ENCODE measurements at regions of chr14 and their contacts with region 1.

Region 1: GRCh38 chr14:55354500-55354899 is 57.1 kb downstream of the ATG14 start:
- DNase-seq: peak; percentile 76 to 87 (median 79)
- H3K4me3 ChIP-seq: peak overlapping the region in 1 of 2 donors; percentile 35
- H3K4me3 Mint-ChIP-seq: peak overlapping the region; percentile 67 to 92 (median 83)
- H3K27ac ChIP-seq: peak overlapping the region; percentile 62
- H3K27ac Mint-ChIP-seq: peak overlapping the region; percentile 92 to 98 (median 96)
- H3K4me1 ChIP-seq: peaks cover 36% of the 10 kb centered on the region
- H3K4me1 Mint-ChIP-seq: peaks cover 24 to 39% (median 30%) of the 10 kb centered on the region in 4 donors
- H3K27me3 ChIP-seq: no peaks in the 10 kb centered on the region
- H3K27me3 Mint-ChIP-seq: no peaks in the 10 kb centered on the region

Region 2: DNA sequence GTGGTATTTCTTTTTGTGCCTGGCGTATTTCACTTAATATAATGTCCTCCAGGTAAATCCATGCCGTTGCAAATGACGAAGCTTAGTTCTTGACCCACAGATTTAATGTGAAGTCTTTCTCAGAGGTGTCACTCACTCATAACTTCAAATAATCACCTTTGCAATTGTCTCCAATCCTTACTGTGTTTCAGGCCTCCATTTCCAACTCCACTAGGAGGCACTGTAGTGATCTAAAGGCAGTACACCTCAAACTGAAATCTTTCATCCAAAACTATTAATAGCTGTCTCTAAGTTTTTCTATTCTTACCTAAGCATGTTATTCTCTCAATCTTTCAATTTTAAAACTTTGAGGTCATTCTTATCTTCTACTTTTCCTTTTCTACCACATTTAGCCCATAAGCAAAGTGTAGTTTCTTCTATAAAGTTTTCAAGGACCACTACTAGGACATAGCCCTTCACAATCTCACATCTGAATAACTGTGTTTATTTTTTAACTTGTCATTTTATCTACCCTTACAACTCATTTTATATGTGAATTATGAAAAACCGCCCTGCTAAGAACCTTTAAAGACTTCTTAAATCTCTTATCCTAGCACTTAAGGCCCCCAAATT is 108.7 kb before region 1 on chr14:
- CTCF ChIA-PET with region 1: interaction called, 82 read pairs
- POLR2A ChIA-PET with region 1: no interaction called
- intact Hi-C with region 1: loop called (anchors 1 kb)
- DNase-seq: peak; percentile 43 to 61 (median 48)
- H3K4me3 ChIP-seq: no peak overlapping the region
- H3K4me3 Mint-ChIP-seq: no peak overlapping the region
- H3K27ac ChIP-seq: no peak overlapping the region
- H3K27ac Mint-ChIP-seq: peak overlapping the region in 1 of 7 donors; percentile 50
- H3K4me1 ChIP-seq: no peaks in the 10 kb centered on the region
- H3K4me1 Mint-ChIP-seq: peaks cover 0 to 1% (median 0%) of the 10 kb centered on the region in 4 donors
- H3K27me3 ChIP-seq: no peaks in the 10 kb centered on the region
- H3K27me3 Mint-ChIP-seq: peaks cover 8% of the 10 kb centered on the region in 2 donors

Region 3: GRCh38 chr14:55303691-55304145 is 50.8 kb before region 1 on chr14:
- CTCF ChIA-PET with region 1: interaction called, 19 read pairs
- POLR2A ChIA-PET with region 1: no interaction called
- intact Hi-C with region 1: no loop called
- DNase-seq: no peak
- H3K4me3 ChIP-seq: no peak overlapping the region
- H3K4me3 Mint-ChIP-seq: peak overlapping the region in 2 of 8 donors; percentile 13 to 17
- H3K27ac ChIP-seq: no peak overlapping the region
- H3K27ac Mint-ChIP-seq: peak overlapping the region in 4 of 7 donors; percentile 9 to 74 (median 19)
- H3K4me1 ChIP-seq: peaks cover 23% of the 10 kb centered on the region
- H3K4me1 Mint-ChIP-seq: peaks cover 34 to 77% (median 50%) of the 10 kb centered on the region in 4 donors
- H3K27me3 ChIP-seq: no peaks in the 10 kb centered on the region
- H3K27me3 Mint-ChIP-seq: no peaks in the 10 kb centered on the region

Region 4: GRCh38 chr14:55333711-55334485 is 20.6 kb before region 1 on chr14:
- CTCF ChIA-PET with region 1: interaction called, 80 read pairs
- POLR2A ChIA-PET with region 1: interaction called, 47 read pairs
- intact Hi-C with region 1: loop called (anchors 1 kb)
- DNase-seq: peak in 4 of 5 donors; percentile 37 to 56 (median 40)
- H3K4me3 ChIP-seq: peak overlapping the region; percentile 11 to 37
- H3K4me3 Mint-ChIP-seq: peak overlapping the region; percentile 81 to 93 (median 89)
- H3K27ac ChIP-seq: peak overlapping the region; percentile 67
- H3K27ac Mint-ChIP-seq: peak overlapping the region; percentile 86 to 97 (median 94)
- H3K4me1 ChIP-seq: peaks cover 84% of the 10 kb centered on the region
- H3K4me1 Mint-ChIP-seq: peaks cover 60 to 90% (median 74%) of the 10 kb centered on the region in 4 donors
- H3K27me3 ChIP-seq: no peaks in the 10 kb centered on the region
- H3K27me3 Mint-ChIP-seq: no peaks in the 10 kb centered on the region

Region 5: DNA sequence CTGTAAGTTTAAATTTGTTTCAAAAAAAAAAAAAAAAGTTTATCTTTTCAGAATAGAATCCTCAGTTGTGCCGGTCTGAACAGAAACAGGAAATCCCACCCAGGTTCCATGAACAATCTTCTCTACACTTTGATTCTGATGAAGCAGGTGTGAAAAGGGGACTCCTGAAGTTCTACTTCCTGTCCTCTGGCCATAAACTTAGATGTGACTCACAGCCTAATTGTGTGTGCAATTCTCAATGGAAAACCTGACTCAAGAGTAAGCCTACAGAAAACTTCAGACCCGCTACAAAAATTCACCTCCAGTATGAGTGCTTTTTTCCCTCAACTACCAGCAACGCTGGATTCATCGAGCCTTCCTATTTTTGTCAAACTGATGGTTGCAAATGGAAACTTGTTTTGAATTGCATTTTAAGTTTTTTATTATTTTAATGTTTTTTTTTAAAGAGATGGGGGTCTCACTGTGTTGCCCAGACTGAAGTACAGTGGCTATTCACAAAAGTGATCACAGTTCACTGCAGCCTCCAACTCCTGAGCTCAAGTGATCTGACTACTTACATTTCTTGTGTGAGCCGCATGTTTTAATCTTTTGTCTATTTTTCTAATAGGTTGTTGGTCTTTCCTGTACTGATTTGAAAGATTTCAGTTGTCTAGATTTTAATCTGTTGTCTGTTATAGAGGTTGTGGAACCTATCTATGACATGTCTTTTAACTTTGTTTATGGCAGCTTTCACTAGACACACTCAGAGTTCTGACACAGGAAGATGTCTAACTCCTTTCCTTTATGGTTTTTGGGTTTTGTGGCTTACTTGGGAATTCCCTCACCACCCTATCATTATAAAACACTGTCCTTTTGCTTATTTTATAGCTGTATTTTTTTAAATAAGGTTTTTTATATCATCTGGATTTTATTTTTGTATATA is 19.5 kb after region 1 on chr14:
- CTCF ChIA-PET with region 1: interaction called, 10 read pairs
- POLR2A ChIA-PET with region 1: interaction called, 5 read pairs
- intact Hi-C with region 1: no loop called
- DNase-seq: peak; percentile 68 to 85 (median 70)
- H3K4me3 ChIP-seq: peak overlapping the region in 1 of 2 donors; percentile 18
- H3K4me3 Mint-ChIP-seq: peak overlapping the region; percentile 52 to 87 (median 58)
- H3K27ac ChIP-seq: peak overlapping the region; percentile 33
- H3K27ac Mint-ChIP-seq: peak overlapping the region; percentile 81 to 98 (median 89)
- H3K4me1 ChIP-seq: peaks cover 33% of the 10 kb centered on the region
- H3K4me1 Mint-ChIP-seq: peaks cover 32 to 49% (median 38%) of the 10 kb centered on the region in 4 donors
- H3K27me3 ChIP-seq: no peaks in the 10 kb centered on the region
- H3K27me3 Mint-ChIP-seq: no peaks in the 10 kb centered on the region

Region 6: GRCh38 chr14:55579724-55580469 is 225.4 kb after region 1 on chr14 and contains the start of gene KTN1:
- CTCF ChIA-PET with region 1: no interaction called
- POLR2A ChIA-PET with region 1: no interaction called
- intact Hi-C with region 1: no loop called
- DNase-seq: peak; percentile 84 to 90 (median 87)
- H3K4me3 ChIP-seq: peak within 1 kb of the TSS; percentile 49 to 87
- H3K4me3 Mint-ChIP-seq: peak within 1 kb of the TSS; percentile 93 to 96 (median 94)
- H3K27ac ChIP-seq: peak within 1 kb of the TSS; percentile 64
- H3K27ac Mint-ChIP-seq: peak within 1 kb of the TSS; percentile 94 to 97 (median 95)
- H3K4me1 ChIP-seq: peaks cover 49% of the 10 kb centered on the region
- H3K4me1 Mint-ChIP-seq: peaks cover 24 to 28% (median 27%) of the 10 kb centered on the region in 4 donors
- H3K27me3 ChIP-seq: no peaks in the 10 kb centered on the region
- H3K27me3 Mint-ChIP-seq: no peaks in the 10 kb centered on the region
- total RNA-seq, gene KTN1: 126 to 133 TPM